ENCODE measurements at regions of chr1 and their contacts with region 1.

Region 1: GRCh38 chr1:33455539-33456501 is 16.6 kb upstream of the ZSCAN20 start:
- DNase-seq: peak; percentile 66
- H3K4me3 ChIP-seq: no peak overlapping the region; a peak in 1 of 4 replicates
- H3K27ac ChIP-seq: peak overlapping the region in 1 of 2 experiments; percentile 18; a peak in 1 of 4 replicates
- H3K4me1 ChIP-seq: peaks cover 0 to 6% of the 10 kb centered on the region in 2 experiments; a peak in 2 of 4 replicates
- H3K27me3 ChIP-seq: no peaks in the 10 kb centered on the region
- CTCF ChIP-seq: peak; percentile 81
- EP300 ChIP-seq: no peak
- RAD21 ChIP-seq: peak; percentile 87

Region 2: DNA sequence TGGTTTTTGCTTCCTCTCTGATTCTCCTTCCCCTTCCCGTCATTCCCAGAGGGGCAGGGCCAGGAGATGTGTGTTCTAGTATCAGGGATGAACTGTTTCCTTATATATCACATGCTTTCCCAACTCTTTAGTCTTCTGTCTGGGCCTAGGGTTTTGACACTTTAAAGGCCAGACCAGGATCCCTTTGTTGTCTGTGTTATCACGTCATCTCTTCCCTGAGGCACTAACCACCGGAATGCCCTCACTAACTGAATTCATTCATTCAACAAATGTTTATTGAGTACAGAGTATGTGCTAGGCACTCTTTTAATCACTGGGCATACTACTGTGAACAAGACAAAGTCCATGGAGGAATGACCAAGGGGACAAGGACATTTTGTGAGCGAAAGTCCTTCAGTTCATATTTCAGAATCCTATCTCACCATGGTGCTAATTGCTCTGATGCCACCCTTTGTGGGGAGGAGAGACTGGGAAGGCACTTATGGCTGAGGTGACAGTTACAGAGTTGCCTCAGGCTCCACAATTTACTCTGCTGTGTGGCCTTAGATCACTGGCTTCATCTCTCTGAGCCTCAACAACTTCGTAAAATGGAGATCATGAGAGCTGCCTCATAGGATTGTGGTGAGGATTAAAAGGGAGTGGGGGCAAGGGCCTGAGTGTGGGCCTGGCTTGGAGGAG is 211.5 kb before region 1 on chr1:
- CTCF ChIA-PET with region 1: no interaction called
- POLR2A ChIA-PET with region 1: no interaction called
- DNase-seq: no peak
- H3K4me3 ChIP-seq: no peak overlapping the region
- H3K27ac ChIP-seq: no peak overlapping the region
- H3K4me1 ChIP-seq: peaks cover 0 to 5% of the 10 kb centered on the region in 2 experiments; a peak in 1 of 4 replicates
- H3K27me3 ChIP-seq: no peaks in the 10 kb centered on the region; the same call in 1 of the 2 replicates
- CTCF ChIP-seq: no peak
- EP300 ChIP-seq: no peak
- RAD21 ChIP-seq: no peak

Region 3: DNA sequence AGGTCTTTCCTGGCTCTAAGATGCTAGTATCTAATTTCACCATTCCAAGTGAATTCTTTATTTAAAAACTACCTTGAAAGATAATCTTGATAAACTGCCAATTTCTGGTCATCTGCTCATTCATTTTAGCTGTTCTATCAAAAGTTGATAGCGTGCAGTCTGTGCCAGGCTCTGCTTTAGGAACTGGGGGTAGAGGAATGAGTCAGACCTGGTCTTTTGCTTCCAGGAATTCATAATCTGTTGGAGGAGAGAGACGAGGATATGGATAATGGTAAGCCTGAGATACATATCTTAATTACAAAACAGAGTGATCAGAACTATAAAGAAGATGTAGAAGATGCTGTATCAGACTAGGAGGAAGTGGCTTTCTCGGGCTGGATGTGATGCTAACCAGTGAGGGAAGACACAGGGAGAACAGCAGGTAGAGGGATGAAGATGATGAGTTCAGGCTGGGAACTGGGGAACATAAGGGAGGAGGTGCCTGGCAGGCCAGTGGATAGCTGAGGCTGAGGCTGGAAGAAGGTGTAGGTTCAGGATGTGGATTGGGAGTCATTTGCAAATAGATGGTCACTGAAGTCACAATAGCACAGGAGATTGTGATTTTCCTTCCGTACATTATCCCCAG is 12.6 kb before region 1 on chr1:
- CTCF ChIA-PET with region 1: interaction called, 58 read pairs
- POLR2A ChIA-PET with region 1: no interaction called
- DNase-seq: no peak
- H3K4me3 ChIP-seq: no peak overlapping the region
- H3K27ac ChIP-seq: peak overlapping the region; percentile 66 to 89
- H3K4me1 ChIP-seq: peaks cover 10 to 21% of the 10 kb centered on the region in 2 experiments; a peak in 3 of 4 replicates
- H3K27me3 ChIP-seq: no peaks in the 10 kb centered on the region
- CTCF ChIP-seq: no peak
- EP300 ChIP-seq: peak in 1 of 2 experiments; percentile 65; a peak in 1 of 4 replicates
- RAD21 ChIP-seq: no peak

Measured in SK-N-SH (cell line).